ENCODE measurements at regions of chr12 and their contacts with region 1.

Region 1: DNA sequence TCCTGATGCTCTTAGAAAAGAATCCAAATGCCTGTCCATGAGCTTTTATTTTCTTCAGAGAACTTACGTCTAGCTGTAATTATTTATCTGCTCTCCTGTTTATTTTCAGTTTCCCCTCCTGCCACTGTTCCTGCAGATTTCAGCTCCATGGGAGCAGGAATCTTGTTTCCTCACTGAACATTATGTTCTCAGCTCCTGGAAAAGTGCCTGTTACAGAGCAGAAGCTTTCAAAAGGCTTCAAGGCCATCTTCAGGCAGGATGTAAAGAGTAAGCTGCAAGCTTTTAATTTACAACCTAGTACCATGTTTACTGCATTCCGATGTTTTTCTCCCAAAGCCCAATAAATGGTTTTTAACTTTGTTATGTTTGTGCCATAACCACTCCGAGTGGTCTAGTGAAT is 98.4 kb upstream of the BTG1 start:
- DNase-seq: peak in 1 of 2 donors; percentile 60
- ATAC-seq: peak; percentile 86 to 98 (median 92)
- H3K4me3 ChIP-seq: peak overlapping the region in 1 of 10 donors; percentile 20
- H3K27ac ChIP-seq: peak overlapping the region; percentile 10 to 84 (median 56)
- H3K4me1 ChIP-seq: peaks cover 0 to 32% (median 16%) of the 10 kb centered on the region in 9 donors
- H3K27me3 ChIP-seq: no peaks in the 10 kb centered on the region
- CTCF ChIP-seq: peak in 6 of 9 donors; percentile 13 to 59 (median 33)

Region 2: DNA sequence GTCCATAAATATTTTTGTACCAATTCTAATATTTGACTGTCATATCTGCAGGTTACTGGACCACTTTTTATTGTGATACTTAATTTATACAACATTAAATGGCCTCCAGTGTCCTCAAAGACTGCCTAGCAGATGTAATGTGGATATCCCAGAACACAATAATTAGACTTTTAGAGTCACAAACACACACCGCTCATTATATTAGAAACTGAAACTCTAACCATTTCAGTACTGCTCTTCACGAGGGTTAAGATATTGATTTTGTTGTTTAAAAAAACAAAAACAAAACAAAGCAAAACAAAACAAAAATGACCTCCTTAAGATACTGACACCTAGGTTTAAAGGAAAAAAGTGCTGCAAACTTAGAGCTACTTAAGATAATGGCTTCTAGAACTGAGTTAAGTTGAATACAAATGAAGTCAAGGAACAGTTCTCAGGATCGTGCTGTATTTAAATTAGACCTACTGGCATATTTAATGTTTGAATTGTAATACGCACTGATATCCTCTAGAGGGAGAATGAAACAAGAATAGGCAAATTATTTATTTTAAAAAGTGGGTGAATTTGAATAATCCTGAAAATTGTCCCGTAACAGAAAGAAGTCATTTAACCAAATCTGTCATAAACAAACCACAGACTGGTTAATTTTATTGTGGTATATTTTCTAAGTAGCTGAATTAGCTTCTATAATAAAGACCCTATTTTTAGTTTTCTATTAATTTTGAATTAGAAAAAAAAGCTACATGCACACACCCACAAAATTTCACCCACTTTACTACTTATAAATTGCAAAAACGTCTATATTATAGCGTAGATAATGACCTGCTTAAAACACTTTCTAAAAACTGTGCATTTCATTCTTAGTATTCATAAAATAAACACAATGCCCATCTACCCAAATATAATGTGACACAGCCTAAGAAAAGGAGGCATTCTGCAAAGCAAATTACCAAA is 666.2 kb before region 1 on chr12:
- intact Hi-C with region 1: loop called in 2 of 10 experiments (anchors 10 kb)
- DNase-seq: no peak
- ATAC-seq: peak in 6 of 8 donors; percentile 39 to 70 (median 61)
- H3K4me3 ChIP-seq: peak overlapping the region in 7 of 10 donors; percentile 16 to 33 (median 26)
- H3K27ac ChIP-seq: peak overlapping the region in 2 of 10 donors; percentile 2 to 11
- H3K4me1 ChIP-seq: peaks cover 0 to 17% (median 9%) of the 10 kb centered on the region in 9 donors
- H3K27me3 ChIP-seq: no peaks in the 10 kb centered on the region
- CTCF ChIP-seq: peak; percentile 56 to 84 (median 74)

Region 3: GRCh38 chr12:91811481-91812287 is 432.4 kb before region 1 on chr12:
- intact Hi-C with region 1: loop called in 5 of 10 experiments (anchors 5 to 10 kb)
- DNase-seq: peak; percentile 70 to 71
- ATAC-seq: peak in 6 of 8 donors; percentile 65 to 84 (median 75)
- H3K4me3 ChIP-seq: no peak overlapping the region
- H3K27ac ChIP-seq: peak overlapping the region in 1 of 10 donors; percentile 11
- H3K4me1 ChIP-seq: peaks cover 0 to 8% (median 0%) of the 10 kb centered on the region in 9 donors
- H3K27me3 ChIP-seq: no peaks in the 10 kb centered on the region
- CTCF ChIP-seq: peak; percentile 71 to 90 (median 84)

Region 4: DNA sequence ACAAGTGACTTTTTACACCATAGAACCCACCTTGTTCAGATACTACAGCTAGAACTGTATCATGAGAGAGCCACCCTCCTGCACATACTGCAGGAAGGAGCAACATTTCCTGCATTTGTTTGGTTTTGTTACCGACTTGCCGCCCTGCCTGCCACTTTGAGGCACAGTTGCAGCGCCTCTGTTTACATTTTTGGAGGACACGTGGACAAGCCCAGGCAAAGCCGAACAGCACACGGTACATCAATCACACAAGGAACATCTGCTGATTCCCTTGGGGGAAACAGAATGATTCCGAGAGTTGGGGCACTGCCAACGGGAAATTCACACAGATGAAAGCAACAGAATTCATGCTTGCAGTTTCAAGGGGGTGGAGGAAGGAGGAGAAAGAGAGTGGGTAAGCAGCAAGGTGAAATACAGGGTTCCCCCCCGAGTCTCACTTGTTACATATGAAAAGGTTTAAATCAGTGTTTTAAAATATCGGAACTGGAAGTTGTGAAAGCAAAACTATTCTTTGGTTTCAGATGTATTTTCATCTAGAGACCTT is 209.1 kb before region 1 on chr12:
- intact Hi-C with region 1: loop called in 1 of 10 experiments (anchors 10 kb)
- DNase-seq: peak; percentile 29 to 47
- ATAC-seq: peak in 7 of 8 donors; percentile 32 to 60 (median 53)
- H3K4me3 ChIP-seq: peak overlapping the region in 7 of 10 donors; percentile 2 to 38 (median 32)
- H3K27ac ChIP-seq: peak overlapping the region in 5 of 10 donors; percentile 6 to 74 (median 51)
- H3K4me1 ChIP-seq: peaks cover 0 to 69% (median 32%) of the 10 kb centered on the region in 9 donors
- H3K27me3 ChIP-seq: no peaks in the 10 kb centered on the region
- CTCF ChIP-seq: no peak

Region 5: DNA sequence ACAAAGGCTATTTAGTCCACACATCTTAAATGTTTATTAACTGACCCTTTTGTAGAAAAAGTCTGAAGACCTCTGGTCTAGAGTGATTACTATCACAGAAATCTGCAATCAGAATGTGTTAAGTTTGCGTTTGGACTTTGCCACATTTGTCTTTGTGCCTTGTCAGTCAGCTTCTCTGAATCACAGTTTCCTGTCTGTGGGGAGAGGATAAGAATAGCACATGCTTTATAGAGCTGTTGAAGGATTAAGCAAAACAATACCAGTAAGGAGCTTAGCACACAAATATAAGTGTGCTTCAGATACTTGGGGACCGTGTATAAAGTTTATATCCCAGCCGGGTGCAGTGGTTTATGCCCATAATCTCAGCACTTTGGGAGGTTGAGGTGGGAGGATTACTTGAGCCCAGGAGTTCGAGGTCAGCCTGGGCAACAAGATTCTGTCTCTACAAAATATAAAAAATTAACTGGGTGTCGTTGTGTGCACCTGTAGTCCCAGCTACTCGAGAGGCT is 35.4 kb before region 1 on chr12:
- intact Hi-C with region 1: loop called in 1 of 10 experiments (anchors 2 kb)
- DNase-seq: peak in 1 of 2 donors; percentile 16
- ATAC-seq: peak; percentile 82 to 95 (median 88)
- H3K4me3 ChIP-seq: peak overlapping the region in 1 of 10 donors; percentile 33
- H3K27ac ChIP-seq: peak overlapping the region in 8 of 10 donors; percentile 1 to 81 (median 37)
- H3K4me1 ChIP-seq: peaks cover 0 to 28% (median 13%) of the 10 kb centered on the region in 9 donors
- H3K27me3 ChIP-seq: no peaks in the 10 kb centered on the region
- CTCF ChIP-seq: no peak

Region 6: GRCh38 chr12:92561543-92561899 is 317.5 kb after region 1 on chr12:
- intact Hi-C with region 1: loop called in 1 of 10 experiments (anchors 10 kb)
- DNase-seq: peak in 1 of 2 donors; percentile 74
- ATAC-seq: peak; percentile 76 to 96 (median 89)
- H3K4me3 ChIP-seq: no peak overlapping the region
- H3K27ac ChIP-seq: peak overlapping the region in 9 of 10 donors; percentile 29 to 68 (median 45)
- H3K4me1 ChIP-seq: peaks cover 0 to 44% (median 24%) of the 10 kb centered on the region in 9 donors
- H3K27me3 ChIP-seq: no peaks in the 10 kb centered on the region
- CTCF ChIP-seq: no peak

Measured in heart right ventricle (tissue), 16 donors.